ENCODE measurements at regions of chrX and their contacts with region 1.

Region 1: DNA sequence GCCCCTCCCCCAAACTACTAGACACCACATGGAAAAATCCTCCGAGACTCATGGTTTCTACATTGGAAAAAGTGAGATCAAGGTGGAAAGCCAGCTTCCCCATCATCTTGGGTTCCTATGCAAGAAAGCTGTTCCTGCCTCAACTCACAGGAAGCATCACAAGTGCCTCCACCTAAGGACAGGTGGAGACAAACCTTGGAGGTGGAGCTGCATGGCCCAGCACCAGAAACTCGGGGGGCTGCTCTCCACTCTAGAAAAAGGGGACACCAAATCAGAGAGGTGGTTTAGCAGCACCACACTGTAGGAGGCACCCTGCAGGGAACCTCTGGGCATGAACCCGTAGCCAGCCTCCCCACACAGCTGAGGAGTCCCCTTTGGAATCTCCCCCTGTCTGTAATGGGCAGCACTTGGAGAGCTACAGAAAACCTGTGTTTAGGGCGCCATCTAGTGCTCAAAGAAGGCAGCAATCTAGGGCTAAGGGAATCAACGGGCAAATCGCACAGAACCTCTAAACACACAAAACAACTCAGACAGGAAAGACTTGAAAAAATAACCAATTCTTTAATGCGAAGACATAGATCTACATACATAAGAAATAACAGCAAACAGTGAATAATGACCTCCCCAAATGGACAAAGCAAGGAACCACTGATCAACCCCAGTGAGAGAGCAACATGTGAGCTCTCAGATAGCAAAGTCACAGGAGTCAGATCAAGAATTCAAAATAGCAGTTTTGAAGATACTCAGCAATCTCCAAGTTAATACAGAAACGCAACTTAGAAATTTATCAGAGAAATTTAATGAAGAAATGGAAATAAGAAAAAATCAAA is 37.0 kb upstream of the ZBTB33 start:
- DNase-seq: peak; percentile 57
- CTCF ChIP-seq: peak; percentile 58

Region 2: DNA sequence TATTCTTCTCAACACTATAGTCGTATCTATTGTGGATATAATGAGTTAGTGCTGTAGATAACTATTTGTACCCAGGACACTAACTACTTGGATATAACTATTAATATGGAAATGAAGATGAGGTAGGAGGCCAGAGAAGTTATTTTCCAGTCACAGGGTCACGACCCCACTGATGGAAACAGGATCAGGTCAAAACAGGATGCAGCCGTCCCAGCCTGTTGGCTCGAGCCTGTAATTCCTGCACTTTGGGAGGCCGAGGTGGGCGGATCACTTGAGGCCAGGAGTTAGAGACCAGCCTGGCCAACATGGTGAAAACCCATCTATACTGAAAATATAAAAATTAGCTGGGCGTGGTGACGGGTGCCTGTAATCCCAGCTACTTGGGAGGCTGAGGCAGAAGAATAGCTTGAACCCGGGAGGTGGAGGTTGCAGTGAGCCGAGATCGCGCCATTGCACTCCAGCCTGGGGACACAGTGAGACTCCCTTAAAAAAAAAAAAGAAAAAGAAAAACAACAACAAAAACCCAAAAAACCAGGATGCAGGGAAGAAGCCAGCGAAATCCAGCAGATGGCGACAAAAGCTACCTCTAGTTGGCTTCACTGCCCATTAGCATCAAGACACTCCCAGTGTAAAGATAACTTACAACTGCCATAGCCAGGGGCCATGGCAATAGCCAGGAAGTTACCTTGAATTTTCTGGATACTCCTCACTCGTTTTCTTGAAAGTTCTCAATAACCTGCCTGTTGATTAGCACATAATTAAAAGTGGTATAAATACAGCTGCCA is 232.2 kb before region 1 on chrX:
- CTCF ChIA-PET with region 1: interaction called, 22 read pairs
- POLR2A ChIA-PET with region 1: no interaction called
- DNase-seq: peak; percentile 40
- CTCF ChIP-seq: peak; percentile 45

Region 3: DNA sequence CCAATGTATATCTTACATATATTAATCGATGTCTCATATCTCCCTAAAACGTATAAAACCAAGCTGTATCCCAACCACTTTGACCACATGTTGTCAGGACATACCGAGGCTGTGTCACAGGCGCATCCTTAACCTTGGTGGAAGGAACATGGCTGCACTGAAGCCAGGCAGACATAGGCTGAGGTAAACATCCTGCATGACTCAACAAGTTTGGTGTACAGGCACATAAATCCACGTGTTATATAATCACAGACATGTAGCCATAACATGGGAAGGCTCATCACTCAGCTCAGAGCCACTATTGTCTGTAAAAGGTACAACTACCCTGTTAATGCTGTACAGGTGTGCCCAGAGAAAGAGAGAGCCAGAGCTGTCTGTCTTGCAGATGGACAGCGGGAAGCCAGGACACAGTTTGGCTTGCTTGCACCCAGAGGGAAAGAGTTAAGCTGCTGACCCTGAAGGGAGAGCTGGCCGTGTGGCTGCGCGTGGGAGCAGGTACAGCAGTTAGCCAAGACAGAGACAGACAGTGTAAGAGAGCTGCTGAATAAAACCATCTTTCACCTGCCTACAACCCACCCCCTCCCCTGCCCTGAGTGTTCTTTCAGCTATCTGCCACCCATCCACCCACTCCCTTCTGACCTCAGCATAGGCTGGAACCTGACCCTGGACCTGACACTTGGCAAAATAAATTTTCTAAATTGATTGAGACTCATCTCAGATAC is 14.7 kb after region 1 on chrX:
- CTCF ChIA-PET with region 1: interaction called, 52 read pairs
- POLR2A ChIA-PET with region 1: no interaction called
- DNase-seq: no peak
- CTCF ChIP-seq: no peak

Region 4: DNA sequence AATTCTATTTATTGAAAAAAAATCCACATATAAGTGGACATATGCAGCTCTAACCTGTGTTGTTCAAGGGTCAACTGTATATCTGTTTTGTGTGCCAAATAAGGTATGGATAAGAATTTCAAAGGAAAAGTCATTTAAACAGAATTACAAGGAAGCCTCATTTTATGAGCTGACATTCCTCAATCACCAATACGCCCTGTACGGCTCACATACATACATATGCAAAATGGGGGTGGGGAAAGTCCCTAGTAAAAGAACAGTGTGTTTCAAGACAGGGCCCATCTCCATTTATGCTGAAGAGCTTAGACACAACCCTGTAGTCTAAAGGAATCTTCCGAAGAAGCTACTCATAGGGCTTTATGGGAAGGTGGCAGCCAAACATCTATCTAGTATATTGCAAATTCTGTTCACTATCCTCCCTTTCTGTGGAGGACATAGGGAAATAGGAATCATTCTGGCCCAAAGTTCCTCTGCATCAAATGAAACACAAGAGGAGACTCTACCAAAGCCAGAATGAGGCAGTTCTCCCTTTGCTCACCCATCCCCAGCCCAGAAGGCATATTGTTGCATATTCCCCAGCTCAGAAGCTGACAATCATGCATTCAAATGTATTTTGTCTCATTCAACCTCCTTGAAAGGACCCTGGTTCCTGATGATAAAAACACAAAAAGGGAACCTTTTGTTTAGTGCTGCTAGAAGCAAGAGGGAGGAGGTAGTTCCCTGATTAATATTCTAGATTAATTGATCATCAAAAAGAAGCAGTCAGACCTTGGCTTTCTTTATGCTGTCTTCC is 23.2 kb after region 1 on chrX:
- CTCF ChIA-PET with region 1: interaction called, 16 read pairs
- POLR2A ChIA-PET with region 1: no interaction called
- DNase-seq: no peak
- CTCF ChIP-seq: no peak

Region 5: DNA sequence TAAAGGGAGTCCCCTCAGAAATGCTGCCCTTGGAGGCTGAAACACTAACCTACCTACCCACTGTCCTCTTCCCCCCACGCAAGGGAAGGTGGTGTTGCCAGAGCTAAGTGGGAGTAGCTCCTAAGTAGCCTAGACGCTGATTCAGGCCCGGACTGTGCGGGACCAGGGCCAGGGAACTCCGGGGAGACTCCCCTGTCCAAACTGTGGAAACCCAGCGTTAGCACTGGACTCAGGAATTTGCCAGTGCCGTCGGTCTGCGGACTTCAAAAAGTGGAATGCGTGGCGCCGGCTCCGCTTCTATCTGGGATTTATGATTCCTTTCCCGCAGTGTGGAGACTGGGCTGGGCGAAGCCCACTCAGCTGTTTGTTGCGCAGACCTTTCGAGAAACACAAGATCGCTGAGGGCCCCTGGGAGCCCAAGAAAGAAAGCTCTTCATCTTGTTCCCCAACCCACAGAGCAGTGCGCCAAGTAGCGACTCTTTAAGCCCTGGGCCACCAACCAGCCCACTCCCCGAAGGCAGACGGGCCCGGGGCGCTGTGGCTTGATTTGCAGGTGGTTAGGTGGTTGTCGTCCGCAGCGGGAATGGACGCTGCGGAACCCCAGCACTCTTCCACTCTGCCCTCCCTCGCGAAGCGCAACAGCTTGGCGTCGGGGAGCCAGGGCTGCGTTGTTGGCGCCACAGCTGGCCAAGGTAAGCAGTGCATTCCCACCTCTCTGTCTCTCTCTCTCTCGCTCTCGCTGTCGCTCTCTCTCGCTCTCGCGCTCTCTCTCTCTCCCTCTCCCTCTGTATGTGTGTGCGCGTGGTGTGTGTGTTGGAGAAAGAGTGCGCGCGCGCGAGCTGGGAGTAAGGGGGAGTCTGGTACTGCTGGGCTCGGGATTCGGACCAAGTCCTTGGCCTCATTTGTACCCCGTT is 95.6 kb after region 1 on chrX:
- CTCF ChIA-PET with region 1: no interaction called
- POLR2A ChIA-PET with region 1: no interaction called
- DNase-seq: peak; percentile 60
- CTCF ChIP-seq: peak; percentile 64

Measured in GM10248 (cell line).